ENCODE measurements at regions of chr7 and their contacts with region 1.

Region 1: GRCh38 chr7:100901921-100902332 is 6.2 kb upstream of the ACHE start:
- DNase-seq: no peak

Region 2: DNA sequence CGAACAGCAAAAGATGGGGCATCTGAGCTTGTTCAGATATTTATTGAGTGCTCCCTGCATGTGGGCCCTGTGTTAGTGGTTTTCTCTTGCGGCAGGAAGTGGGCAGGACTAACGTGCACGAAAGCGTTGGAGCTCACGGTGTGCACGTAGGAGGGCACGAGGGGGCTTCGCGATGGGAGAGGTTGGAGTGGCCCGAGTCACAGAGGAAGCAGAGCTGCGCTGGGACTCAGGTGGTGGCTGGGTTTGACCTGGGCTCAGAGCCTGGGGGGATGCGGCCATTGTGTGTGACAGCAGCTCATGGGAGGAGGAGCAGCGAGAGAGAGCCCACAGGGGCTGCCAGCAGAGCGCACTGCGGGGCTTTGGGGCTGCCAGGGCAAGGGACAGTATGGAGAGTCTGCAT is 1277.4 kb before region 1 on chr7:
- intact Hi-C with region 1: loop called in 1 of 2 experiments (anchors 10 kb)
- DNase-seq: no peak

Region 3: DNA sequence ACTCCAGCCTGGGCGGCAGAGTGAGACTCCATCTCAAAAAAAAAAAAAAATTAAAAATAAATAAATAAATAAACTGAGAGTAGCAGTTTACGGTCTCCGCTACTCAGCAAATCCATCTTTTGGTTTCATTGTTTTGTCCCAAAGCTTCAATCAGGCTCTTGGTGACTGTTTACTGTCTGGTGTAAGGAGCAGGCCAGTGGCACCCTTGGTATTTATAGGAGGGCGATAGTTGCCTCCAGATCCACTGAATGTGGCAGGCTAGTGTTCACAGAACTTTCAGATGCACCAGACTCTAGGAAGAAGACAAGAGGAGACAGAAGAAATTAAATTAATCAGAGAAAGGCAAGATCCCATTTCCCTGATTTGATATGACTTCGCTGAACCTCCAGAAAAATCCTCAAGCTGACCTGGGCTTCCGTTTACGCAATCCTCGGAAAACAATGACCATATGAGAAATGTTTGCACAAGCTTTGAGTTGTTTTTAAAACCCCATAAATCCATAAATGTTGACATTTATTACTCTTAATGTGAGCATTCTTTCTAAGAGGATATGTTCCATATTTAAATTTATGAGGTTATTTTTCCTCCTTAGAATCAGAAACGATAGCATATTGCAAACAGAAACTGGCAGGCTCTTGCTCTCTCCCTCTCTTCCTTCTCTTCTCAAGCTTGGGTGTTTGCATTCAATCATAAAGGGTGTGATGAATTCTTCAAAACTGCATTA is 40.3 kb after region 1 on chr7:
- intact Hi-C with region 1: loop called in 1 of 2 experiments (anchors 1 kb)
- DNase-seq: no peak

Region 4: GRCh38 chr7:101201695-101202604 is 300.0 kb after region 1 on chr7:
- intact Hi-C with region 1: no loop called
- DNase-seq: no peak

Measured in posterior vena cava (tissue), 2 donors.